Cardiac septum (tissue), 1 donor: ENCODE measurements at regions of chr7 and their contacts with region 1.

Region 1: DNA sequence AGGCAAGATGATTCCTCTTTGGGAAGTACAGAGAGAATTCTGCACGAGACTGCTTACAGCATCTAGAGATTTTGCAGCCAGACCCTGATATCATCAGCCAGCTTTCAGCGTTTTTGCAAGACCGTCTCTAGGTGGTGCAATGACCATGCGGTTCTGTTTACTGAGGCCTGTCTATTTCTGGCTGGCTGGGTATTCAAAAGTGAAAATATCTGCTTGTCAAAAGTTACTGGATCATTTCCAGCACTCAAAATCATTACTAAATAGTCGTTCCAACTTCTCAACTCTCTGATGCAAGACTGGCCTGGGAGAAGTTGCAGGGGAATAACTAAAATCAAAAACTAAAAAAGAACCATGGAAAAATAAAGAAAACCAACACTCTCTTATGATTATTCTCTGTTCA is 240.1 kb downstream of the ELMO1 start:
- DNase-seq: no peak

Region 2: GRCh38 chr7:37027557-37028341 is 180.8 kb before region 1 on chr7:
- intact Hi-C with region 1: no loop called
- DNase-seq: no peak

Region 3: DNA sequence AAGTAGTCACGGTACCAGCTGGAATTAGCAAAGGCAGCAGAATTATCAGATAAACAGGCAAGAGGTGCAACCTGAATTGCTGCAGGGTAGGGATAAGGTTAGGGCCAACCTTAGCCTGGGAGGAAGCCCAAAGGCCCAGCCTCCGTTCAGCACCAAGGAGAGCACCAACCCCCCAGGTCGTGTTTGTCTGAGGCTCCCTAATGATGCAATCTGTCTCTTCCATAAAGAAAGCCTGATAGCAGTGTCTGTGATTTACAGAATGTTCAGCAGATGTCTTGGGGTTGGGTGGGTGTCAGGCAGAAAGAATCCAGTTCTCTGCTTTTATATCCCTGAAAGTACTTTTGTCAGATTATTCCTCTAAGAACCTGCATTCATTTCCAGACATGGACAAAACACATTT is 155.8 kb before region 1 on chr7:
- intact Hi-C with region 1: no loop called
- DNase-seq: no peak

Region 4: GRCh38 chr7:37259319-37259821 is 50.8 kb after region 1 on chr7:
- intact Hi-C with region 1: no loop called
- DNase-seq: no peak

Region 5: DNA sequence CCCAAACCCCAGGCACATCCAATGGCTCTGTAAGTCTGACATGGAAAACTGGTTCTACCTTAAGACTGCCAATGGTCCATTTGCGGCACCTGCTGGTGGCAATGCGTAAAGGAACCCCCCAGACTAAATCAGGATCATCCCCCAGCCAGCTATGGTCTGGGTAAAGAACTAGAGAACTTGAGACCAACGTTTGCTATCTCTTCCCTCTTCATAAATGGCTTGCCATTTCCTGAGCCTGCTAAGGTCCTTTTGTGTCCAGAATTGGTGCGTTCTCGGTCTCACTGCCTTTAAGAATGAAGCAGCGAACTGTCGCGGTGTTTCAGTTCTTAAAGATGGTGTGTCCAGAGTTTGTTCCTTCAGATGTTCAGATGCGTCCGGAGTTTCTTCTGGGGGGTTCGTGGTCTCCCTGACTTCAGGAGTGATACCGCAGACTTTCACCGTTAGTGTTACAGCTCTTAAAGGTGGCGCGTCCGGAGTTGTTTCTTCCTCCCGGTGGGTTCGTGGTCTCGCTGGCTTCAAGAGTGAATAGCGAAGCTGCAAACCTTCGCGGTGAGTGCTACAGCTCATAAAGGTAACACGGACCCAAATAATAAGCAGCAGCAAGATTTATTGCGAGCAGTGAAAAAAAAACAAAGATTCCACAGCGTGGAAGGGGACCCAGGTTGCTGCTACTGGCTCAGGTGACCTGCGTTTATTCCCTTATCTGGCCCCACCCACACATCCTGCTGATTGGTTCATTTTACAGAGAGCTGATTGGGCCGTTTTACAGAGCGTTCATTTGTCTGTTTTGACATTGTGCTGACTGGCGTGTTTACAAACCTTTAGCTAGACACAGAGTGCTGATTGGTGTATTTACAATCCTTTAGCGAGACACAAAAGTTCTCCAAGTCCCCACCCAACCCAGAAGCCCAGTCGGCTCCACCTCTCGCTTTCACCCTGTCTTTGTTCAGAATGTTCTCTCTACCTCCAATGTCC is 144.7 kb after region 1 on chr7:
- intact Hi-C with region 1: loop called (anchors 10 kb)
- DNase-seq: no peak

Region 6: GRCh38 chr7:37440738-37441385 is 232.3 kb after region 1 on chr7:
- intact Hi-C with region 1: loop called (anchors 5 kb)
- DNase-seq: no peak

Region 7: DNA sequence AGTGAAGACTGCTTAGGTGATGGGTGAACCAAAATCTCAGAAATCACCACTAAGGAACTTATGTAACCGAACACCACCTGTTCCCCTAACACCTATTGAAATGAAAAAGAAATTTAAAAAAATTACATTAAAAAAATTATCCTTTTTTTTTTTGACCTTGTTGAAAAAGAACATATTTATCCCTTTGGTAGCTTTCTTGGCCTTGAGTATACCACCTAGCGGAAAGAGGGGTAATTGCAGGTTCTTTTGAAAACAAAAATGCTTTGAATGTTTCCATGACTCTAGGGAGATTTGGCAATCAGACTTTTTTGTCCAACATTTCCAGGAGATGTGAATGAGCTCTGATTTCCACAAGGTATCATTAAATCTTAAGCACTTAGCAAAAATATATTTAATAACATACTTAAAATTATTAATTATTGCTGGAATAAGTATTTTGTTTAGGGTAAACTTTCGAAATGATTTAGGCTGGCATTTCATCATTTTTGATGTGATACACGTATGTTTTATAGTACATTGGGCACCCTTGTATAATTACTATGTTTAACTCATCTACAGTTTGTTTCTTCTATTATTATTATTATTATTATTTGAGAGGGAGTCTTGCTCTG is 287.2 kb after region 1 on chr7:
- intact Hi-C with region 1: loop called (anchors 5 kb)
- DNase-seq: no peak

Region 8: DNA sequence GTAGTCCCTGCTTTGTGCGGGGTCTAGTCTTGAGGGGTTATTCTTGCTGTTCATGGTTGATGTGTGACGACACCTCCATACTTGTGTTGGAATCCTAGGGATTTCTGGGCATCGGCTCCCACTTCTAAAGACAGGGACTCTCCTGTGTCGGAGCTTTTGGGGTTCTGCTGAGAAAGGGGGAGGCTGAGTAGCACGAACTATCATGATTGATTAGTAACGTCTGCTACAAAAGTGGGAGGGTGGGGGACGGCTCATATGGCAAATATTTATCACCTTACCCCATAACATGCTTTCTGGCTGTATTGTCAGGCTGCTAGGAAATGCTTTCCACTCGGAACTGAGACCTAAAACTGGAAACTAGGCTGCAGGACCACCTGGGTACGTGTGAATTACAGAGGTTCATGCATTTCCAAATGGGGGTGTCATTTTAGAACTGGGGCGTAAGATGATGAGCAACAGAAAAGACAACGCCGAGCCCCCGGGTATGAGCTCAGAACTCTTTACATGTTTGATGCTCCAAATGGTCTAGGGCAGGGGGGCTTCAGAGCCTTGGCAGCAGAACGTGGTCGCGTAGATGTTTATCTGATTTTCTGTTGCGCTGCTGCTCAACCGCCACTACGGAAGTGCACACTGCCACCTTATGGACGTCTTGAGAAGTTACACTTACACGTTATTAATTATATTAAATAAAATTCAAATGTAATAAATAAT is 624.7 kb after region 1 on chr7:
- intact Hi-C with region 1: loop called (anchors 5 kb)
- DNase-seq: no peak